ENCODE measurements at regions of chr20 and their contacts with region 1.

Region 1: GRCh38 chr20:44069203-44070011 is 117.6 kb downstream of the JPH2 start:
- DNase-seq: peak; percentile 53 to 93
- ATAC-seq: peak; percentile 75 to 80 (median 77)
- H3K4me3 ChIP-seq: peak overlapping the region; percentile 14
- H3K4me3 Mint-ChIP-seq: peak overlapping the region; percentile 86
- H3K27ac ChIP-seq: peak overlapping the region; percentile 84
- H3K27ac Mint-ChIP-seq: peak overlapping the region; percentile 82 to 88
- H3K4me1 ChIP-seq: peaks cover 37% of the 10 kb centered on the region
- H3K4me1 Mint-ChIP-seq: peaks cover 24 to 38% of the 10 kb centered on the region in 2 donors
- H3K27me3 ChIP-seq: peaks cover 3% of the 10 kb centered on the region
- H3K27me3 Mint-ChIP-seq: peaks cover 34 to 36% of the 10 kb centered on the region in 2 donors
- CTCF ChIP-seq: no peak

Region 2: GRCh38 chr20:44028868-44029847 is 40.2 kb before region 1 on chr20:
- intact Hi-C with region 1: loop called (anchors 5 kb)
- DNase-seq: peak in 1 of 2 donors; percentile 33
- ATAC-seq: peak; percentile 82 to 89 (median 84)
- H3K4me3 ChIP-seq: no peak overlapping the region
- H3K4me3 Mint-ChIP-seq: peak overlapping the region; percentile 93
- H3K27ac ChIP-seq: no peak overlapping the region
- H3K27ac Mint-ChIP-seq: peak overlapping the region; percentile 41 to 91
- H3K4me1 ChIP-seq: peaks cover 34% of the 10 kb centered on the region
- H3K4me1 Mint-ChIP-seq: peaks cover 47 to 61% of the 10 kb centered on the region in 2 donors
- H3K27me3 ChIP-seq: peaks cover 19% of the 10 kb centered on the region
- H3K27me3 Mint-ChIP-seq: peaks cover 67 to 79% of the 10 kb centered on the region in 2 donors
- CTCF ChIP-seq: no peak

Region 3: GRCh38 chr20:44089987-44090674 is 20.7 kb after region 1 on chr20:
- intact Hi-C with region 1: no loop called
- DNase-seq: no peak
- ATAC-seq: no peak
- H3K4me3 ChIP-seq: no peak overlapping the region
- H3K4me3 Mint-ChIP-seq: no peak overlapping the region
- H3K27ac ChIP-seq: no peak overlapping the region
- H3K27ac Mint-ChIP-seq: no peak overlapping the region
- H3K4me1 ChIP-seq: no peaks in the 10 kb centered on the region
- H3K4me1 Mint-ChIP-seq: no peaks in the 10 kb centered on the region
- H3K27me3 ChIP-seq: no peaks in the 10 kb centered on the region
- H3K27me3 Mint-ChIP-seq: peaks cover 16 to 19% of the 10 kb centered on the region in 2 donors
- CTCF ChIP-seq: no peak

Region 4: GRCh38 chr20:44398303-44398702 is 328.9 kb after region 1 on chr20:
- intact Hi-C with region 1: no loop called
- DNase-seq: no peak
- ATAC-seq: no peak
- H3K4me3 ChIP-seq: no peak overlapping the region
- H3K4me3 Mint-ChIP-seq: no peak overlapping the region
- H3K27ac ChIP-seq: no peak overlapping the region
- H3K27ac Mint-ChIP-seq: no peak overlapping the region
- H3K4me1 ChIP-seq: no peaks in the 10 kb centered on the region
- H3K4me1 Mint-ChIP-seq: no peaks in the 10 kb centered on the region
- H3K27me3 ChIP-seq: no peaks in the 10 kb centered on the region
- H3K27me3 Mint-ChIP-seq: peaks cover 0 to 11% of the 10 kb centered on the region in 2 donors
- CTCF ChIP-seq: no peak